A673 (cell line): ENCODE measurements at regions of chr1 and their contacts with region 1.

Region 1: DNA sequence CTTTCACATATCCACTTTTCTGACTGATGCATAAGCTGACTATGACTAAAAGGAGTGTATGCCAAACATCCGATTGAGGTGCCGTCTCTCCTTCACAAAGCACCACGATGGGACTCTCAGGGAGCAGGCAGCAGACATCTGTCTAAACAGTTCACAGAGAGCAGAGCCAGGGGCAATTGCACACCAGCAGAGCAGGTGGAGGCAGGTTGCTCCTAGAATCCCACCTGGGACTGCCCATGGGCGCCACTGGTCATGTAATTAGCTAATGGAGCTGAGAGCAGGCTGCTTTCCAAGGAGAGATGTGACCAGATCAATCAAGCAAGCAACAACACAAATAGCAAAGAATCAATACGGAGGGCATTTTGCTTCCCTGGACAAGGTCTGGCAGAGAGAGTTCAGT is 30.5 kb upstream of the COA6 start:
- DNase-seq: no peak
- H3K4me3 ChIP-seq: no peak overlapping the region
- H3K27ac ChIP-seq: no peak overlapping the region
- H3K4me1 ChIP-seq: no peaks in the 10 kb centered on the region
- H3K27me3 ChIP-seq: no peaks in the 10 kb centered on the region
- CTCF ChIP-seq: no peak

Region 2: GRCh38 chr1:233005703-233006102 is 1337.1 kb before region 1 on chr1:
- CTCF ChIA-PET with region 1: no interaction called
- POLR2A ChIA-PET with region 1: no interaction called
- intact Hi-C with region 1: no loop called
- DNase-seq: no peak
- H3K4me3 ChIP-seq: no peak overlapping the region
- H3K27ac ChIP-seq: no peak overlapping the region
- H3K4me1 ChIP-seq: no peaks in the 10 kb centered on the region
- H3K27me3 ChIP-seq: no peaks in the 10 kb centered on the region
- CTCF ChIP-seq: no peak

Region 3: DNA sequence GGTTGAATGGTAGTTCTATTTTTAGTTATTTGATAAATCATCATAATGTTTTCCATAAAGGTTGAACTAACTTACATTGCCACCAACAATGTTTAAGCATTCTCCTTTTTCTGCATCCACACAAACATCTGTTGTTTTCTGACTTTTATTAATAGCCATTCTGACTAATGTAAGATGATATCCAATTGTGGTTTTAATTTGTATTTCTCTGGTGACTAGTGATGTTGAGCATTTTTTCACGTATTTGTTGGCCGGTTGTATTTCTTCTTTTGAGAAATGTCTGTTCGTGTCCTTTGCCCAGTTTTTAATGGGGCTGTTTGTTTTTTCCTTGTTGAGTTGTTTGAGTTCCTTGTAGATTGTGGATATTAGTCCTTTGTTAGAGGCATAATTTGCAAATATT is 462.9 kb before region 1 on chr1:
- CTCF ChIA-PET with region 1: no interaction called
- POLR2A ChIA-PET with region 1: no interaction called
- intact Hi-C with region 1: no loop called
- DNase-seq: no peak
- H3K4me3 ChIP-seq: no peak overlapping the region
- H3K27ac ChIP-seq: no peak overlapping the region
- H3K4me1 ChIP-seq: no peaks in the 10 kb centered on the region
- H3K27me3 ChIP-seq: peaks cover 36% of the 10 kb centered on the region
- CTCF ChIP-seq: no peak

Region 4: GRCh38 chr1:234326497-234327366 is 16.0 kb before region 1 on chr1:
- CTCF ChIA-PET with region 1: no interaction called
- POLR2A ChIA-PET with region 1: no interaction called
- intact Hi-C with region 1: no loop called
- DNase-seq: peak; percentile 85
- H3K4me3 ChIP-seq: no peak overlapping the region
- H3K27ac ChIP-seq: no peak overlapping the region
- H3K4me1 ChIP-seq: peaks cover 5% of the 10 kb centered on the region
- H3K27me3 ChIP-seq: no peaks in the 10 kb centered on the region
- CTCF ChIP-seq: peak; percentile 90

Region 5: GRCh38 chr1:235169986-235170385 is 827.2 kb after region 1 on chr1:
- CTCF ChIA-PET with region 1: no interaction called
- POLR2A ChIA-PET with region 1: interaction called, 10 read pairs
- intact Hi-C with region 1: no loop called
- DNase-seq: no peak
- H3K4me3 ChIP-seq: no peak overlapping the region
- H3K27ac ChIP-seq: no peak overlapping the region
- H3K4me1 ChIP-seq: no peaks in the 10 kb centered on the region
- H3K27me3 ChIP-seq: no peaks in the 10 kb centered on the region
- CTCF ChIP-seq: no peak